Ascending aorta (tissue), 2 donors: ENCODE measurements at regions of chr1 and their contacts with region 1.

Region 1: GRCh38 chr1:155227261-155228095 is 19.0 kb downstream of the MTX1 start:
- DNase-seq: peak; percentile 96 to 99
- H3K4me3 ChIP-seq: peak overlapping the region; percentile 65 to 67
- H3K27ac ChIP-seq: peak overlapping the region; percentile 79 to 86
- H3K4me1 ChIP-seq: peaks cover 3 to 36% of the 10 kb centered on the region in 2 donors
- H3K27me3 ChIP-seq: no peaks in the 10 kb centered on the region
- CTCF ChIP-seq: no peak

Region 2: DNA sequence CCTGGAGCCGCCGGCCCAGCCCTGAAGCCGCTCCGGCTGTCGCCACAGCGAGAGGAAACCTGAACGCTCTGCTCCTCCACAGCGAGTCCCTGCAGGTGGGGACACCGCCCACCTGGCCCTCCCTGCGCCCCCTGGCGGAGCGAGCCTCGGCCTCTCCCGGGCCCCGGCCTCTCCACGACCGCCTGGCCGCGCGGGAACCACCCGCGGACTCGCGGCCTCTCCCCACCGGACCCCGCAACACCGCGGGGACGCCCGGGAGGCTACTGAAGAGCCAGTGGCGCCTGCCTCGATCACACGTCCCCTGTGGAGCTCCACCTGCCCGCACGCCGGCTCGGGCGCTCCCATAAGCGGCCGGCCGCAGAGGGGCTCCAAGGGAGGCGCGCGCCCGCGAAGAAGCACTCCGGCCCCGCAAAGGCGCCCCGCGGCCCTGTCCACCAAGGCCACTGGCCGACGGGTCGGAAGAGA is 467.0 kb before region 1 on chr1:
- intact Hi-C with region 1: no loop called
- DNase-seq: peak in 1 of 2 donors; percentile 65
- H3K4me3 ChIP-seq: peak overlapping the region; percentile 16 to 40
- H3K27ac ChIP-seq: no peak overlapping the region
- H3K4me1 ChIP-seq: peaks cover 0 to 4% of the 10 kb centered on the region in 2 donors
- H3K27me3 ChIP-seq: no peaks in the 10 kb centered on the region
- CTCF ChIP-seq: peak; percentile 50 to 75 (median 71)

Region 3: GRCh38 chr1:155070721-155071569 is 156.5 kb before region 1 on chr1:
- intact Hi-C with region 1: no loop called
- DNase-seq: peak in 1 of 2 donors; percentile 88
- H3K4me3 ChIP-seq: peak overlapping the region; percentile 46 to 65
- H3K27ac ChIP-seq: peak overlapping the region; percentile 9 to 33
- H3K4me1 ChIP-seq: peaks cover 0 to 13% of the 10 kb centered on the region in 2 donors
- H3K27me3 ChIP-seq: no peaks in the 10 kb centered on the region
- CTCF ChIP-seq: peak; percentile 21 to 52 (median 38)

Region 4: DNA sequence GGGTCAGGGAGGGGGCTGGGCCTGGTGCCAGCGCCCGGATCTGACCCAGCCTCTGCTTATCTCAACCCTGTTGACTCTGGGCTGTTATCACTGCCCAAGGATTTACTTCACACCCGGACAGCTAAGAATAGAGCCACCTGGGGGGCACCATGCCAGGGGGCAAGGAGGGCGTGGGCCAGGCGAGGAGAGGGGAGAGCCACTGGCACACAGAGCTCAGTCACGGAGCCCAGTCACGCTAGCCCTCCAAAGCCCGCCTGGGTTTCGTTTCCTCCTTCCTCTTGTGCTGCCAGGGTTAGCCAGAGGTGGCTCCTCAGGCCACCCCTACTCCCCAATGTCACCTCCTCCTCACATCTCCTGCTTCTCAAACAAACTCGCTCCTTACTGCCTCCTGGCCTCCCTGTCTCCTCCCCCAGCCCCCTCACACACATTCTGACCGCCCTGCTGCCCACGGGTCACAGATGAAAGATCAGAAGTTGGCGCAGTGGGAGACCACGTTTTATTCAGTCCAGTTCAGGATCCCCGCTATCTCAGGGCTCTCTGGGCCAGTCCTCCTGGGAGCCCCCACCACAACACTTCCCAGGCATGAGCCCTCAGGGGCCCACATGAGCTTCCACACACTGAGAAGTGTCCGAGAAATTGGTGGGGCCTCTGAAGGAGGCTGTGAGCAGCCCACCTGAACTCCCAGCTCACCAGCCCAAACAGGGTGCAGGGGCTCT is 42.0 kb before region 1 on chr1:
- intact Hi-C with region 1: no loop called
- DNase-seq: peak in 1 of 2 donors; percentile 8
- H3K4me3 ChIP-seq: no peak overlapping the region
- H3K27ac ChIP-seq: no peak overlapping the region
- H3K4me1 ChIP-seq: no peaks in the 10 kb centered on the region
- H3K27me3 ChIP-seq: no peaks in the 10 kb centered on the region
- CTCF ChIP-seq: no peak

Region 5: GRCh38 chr1:155244368-155245162 is 17.1 kb after region 1 on chr1:
- intact Hi-C with region 1: loop called (anchors 2 kb)
- DNase-seq: peak; percentile 97 to 99
- H3K4me3 ChIP-seq: peak overlapping the region; percentile 69 to 80
- H3K27ac ChIP-seq: peak overlapping the region; percentile 83 to 92
- H3K4me1 ChIP-seq: peaks cover 3 to 28% of the 10 kb centered on the region in 2 donors
- H3K27me3 ChIP-seq: no peaks in the 10 kb centered on the region
- CTCF ChIP-seq: peak; percentile 27 to 99 (median 58)

Region 6: GRCh38 chr1:155295183-155295941 is 67.9 kb after region 1 on chr1:
- intact Hi-C with region 1: no loop called
- DNase-seq: no peak
- H3K4me3 ChIP-seq: peak overlapping the region in 1 of 2 donors; percentile 44
- H3K27ac ChIP-seq: no peak overlapping the region
- H3K4me1 ChIP-seq: peaks cover 0 to 5% of the 10 kb centered on the region in 2 donors
- H3K27me3 ChIP-seq: no peaks in the 10 kb centered on the region
- CTCF ChIP-seq: no peak